ENCODE measurements at regions of chr17 and their contacts with region 1.

Region 1: GRCh38 chr17:60036796-60037612 is 41.7 kb downstream of the HEATR6 start:
- DNase-seq: peak; percentile 68 to 85 (median 72)
- ATAC-seq: peak; percentile 97
- H3K4me3 ChIP-seq: no peak overlapping the region
- H3K27ac ChIP-seq: no peak overlapping the region
- H3K4me1 ChIP-seq: peaks cover 6 to 16% of the 10 kb centered on the region in 2 experiments; a peak in 4 of 5 replicates
- H3K27me3 ChIP-seq: no peaks in the 10 kb centered on the region
- CTCF ChIP-seq: peak; percentile 88 to 98 (median 92)
- EP300 ChIP-seq: no peak
- POLR2A ChIP-seq: no peak
- RAD21 ChIP-seq: peak in 1 of 2 experiments; percentile 62; a peak in 2 of 4 replicates

Region 2: DNA sequence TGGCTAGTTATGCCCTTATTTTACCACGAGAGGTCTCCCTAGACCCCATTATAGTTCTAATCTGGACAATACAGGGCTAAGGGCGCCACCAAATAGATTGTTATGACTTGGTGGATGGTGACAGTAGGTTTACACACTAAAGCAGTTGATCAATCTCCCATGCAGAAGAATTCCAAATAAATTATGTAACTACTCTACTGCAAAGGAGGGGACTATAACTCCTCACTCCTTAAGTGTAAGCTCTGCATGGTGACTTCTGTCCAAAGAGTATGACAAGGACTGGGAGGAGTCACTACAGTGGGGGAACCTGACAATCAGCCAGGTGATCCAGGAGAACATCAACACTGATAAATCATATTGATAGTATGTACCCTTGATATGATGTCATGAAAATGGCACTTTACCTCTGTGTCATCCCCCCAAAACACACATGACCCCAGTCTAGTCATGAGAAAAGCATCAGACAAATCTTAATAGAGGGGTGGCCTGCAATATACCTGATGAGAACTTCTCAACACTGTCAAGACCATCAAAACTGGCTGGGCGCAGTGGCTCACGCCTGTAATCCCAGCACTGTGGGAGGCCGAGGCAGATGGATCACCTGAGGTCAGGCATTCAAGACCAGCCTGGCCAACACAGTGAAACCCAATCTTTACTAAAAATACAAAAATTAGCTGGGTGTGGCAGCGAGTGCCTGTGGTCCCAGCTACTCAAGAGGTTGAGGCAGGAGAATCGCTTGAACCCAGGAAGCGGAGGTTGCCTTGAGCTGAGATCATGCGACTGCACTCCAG is 725.7 kb before region 1 on chr17:
- CTCF ChIA-PET with region 1: no interaction called
- POLR2A ChIA-PET with region 1: no interaction called
- in situ Hi-C with region 1: loop called (anchors 10 kb)
- intact Hi-C with region 1: no loop called
- DNase-seq: peak; percentile 66 to 81 (median 71)
- ATAC-seq: peak; percentile 98
- H3K4me3 ChIP-seq: no peak overlapping the region
- H3K27ac ChIP-seq: no peak overlapping the region
- H3K4me1 ChIP-seq: 0 out of 5 replicates have a peak, but pooled peaks cover 0 to 4% of the 10 kb centered on the region in 2 experiments
- H3K27me3 ChIP-seq: no peaks in the 10 kb centered on the region
- CTCF ChIP-seq: peak; percentile 81 to 94 (median 88)
- EP300 ChIP-seq: no peak
- POLR2A ChIP-seq: no peak
- RAD21 ChIP-seq: peak; percentile 94 to 95

Region 3: DNA sequence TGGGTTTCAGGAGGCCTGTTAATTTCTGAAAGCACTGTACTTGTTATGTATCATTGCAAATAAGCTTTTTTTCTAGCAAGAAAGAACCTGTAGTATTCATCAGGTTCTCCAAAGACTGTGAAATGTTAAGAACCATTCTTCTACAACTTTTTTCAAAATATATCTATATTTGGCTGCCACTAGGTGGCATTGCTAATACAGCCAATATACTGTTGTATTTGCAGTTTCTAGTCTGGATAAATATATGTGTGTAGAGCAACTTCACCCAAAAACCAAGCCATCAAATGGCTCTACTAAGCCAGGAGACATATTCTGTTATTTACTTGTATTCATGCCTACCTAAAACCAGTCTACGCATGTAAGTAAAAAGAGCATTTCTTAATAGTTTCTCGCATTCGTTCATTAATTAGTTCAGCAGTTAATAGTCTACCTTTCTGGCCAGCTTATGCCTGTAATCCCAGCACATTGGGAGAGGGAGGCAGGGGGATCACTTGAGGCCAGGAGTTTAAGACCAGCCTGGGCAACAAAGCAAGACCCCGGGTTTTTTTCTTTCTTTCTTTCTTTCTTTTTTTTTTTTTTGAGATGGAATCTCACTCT is 290.1 kb before region 1 on chr17:
- CTCF ChIA-PET with region 1: no interaction called
- POLR2A ChIA-PET with region 1: no interaction called
- in situ Hi-C with region 1: loop called (anchors 5 kb)
- intact Hi-C with region 1: no loop called
- DNase-seq: peak in 3 of 4 experiments; percentile 14 to 56 (median 22)
- ATAC-seq: peak; percentile 78
- H3K4me3 ChIP-seq: no peak overlapping the region
- H3K27ac ChIP-seq: no peak overlapping the region
- H3K4me1 ChIP-seq: no peaks in the 10 kb centered on the region; a peak in 1 of 5 replicates
- H3K27me3 ChIP-seq: no peaks in the 10 kb centered on the region
- CTCF ChIP-seq: peak; percentile 46 to 74 (median 55); a peak in 4 of 6 replicates
- EP300 ChIP-seq: no peak
- POLR2A ChIP-seq: no peak
- RAD21 ChIP-seq: peak; percentile 58 to 83

Region 4: DNA sequence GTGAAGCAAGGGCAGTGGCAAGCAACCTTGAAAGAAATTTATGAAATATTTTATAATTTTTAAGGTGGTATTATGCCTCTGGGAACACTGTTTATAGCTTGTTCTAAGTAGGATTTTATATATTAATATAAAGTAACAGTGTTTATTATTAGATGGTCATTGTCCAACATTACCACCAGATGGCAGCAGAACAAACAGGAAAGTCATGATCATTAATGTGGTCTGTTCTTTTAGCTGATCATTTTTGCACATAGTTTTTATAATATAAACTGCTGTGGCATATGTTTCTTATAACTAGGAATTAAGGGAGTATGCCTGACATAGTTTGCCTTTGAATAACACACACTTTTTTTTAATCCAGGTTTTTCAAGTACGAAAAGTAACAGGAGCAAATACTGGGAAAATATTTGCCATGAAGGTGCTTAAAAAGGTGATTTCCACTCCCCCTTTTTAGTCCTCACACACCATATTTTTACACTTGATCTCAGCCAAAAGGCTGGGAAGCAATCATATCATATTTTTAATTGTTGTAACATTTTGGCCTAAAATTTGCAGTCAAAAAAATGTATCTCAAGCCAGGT is 122.6 kb before region 1 on chr17:
- CTCF ChIA-PET with region 1: interaction called, 3 read pairs
- POLR2A ChIA-PET with region 1: no interaction called
- in situ Hi-C with region 1: loop called (anchors 5 kb)
- intact Hi-C with region 1: no loop called
- DNase-seq: peak; percentile 47 to 55 (median 50)
- ATAC-seq: peak; percentile 70
- H3K4me3 ChIP-seq: no peak overlapping the region
- H3K27ac ChIP-seq: no peak overlapping the region
- H3K4me1 ChIP-seq: no peaks in the 10 kb centered on the region
- H3K27me3 ChIP-seq: no peaks in the 10 kb centered on the region
- CTCF ChIP-seq: peak in 2 of 3 experiments; percentile 43 to 73; a peak in 4 of 6 replicates
- EP300 ChIP-seq: no peak
- POLR2A ChIP-seq: no peak
- RAD21 ChIP-seq: peak; percentile 62 to 70

Region 5: DNA sequence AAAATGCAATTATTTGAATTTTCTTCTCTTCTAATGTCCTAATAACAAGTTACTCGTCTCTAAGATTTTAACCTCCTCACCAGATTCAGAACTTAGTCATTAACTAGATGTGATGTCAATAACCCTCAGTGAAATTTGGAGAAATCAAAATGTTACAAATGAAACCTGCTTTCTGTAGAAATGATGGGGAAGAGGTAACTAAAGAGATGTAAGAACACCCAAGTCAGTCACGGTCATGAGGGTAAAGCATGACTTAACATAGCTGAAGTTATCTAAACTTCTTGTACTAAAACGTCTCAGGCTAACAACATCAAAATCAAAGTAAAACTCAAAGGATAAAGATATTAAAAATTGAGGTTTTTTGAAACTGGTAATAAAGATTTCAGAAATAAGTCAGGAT is 82.1 kb before region 1 on chr17:
- CTCF ChIA-PET with region 1: no interaction called
- POLR2A ChIA-PET with region 1: no interaction called
- in situ Hi-C with region 1: loop called (anchors 5 kb)
- intact Hi-C with region 1: no loop called
- DNase-seq: no peak
- ATAC-seq: no peak
- H3K4me3 ChIP-seq: no peak overlapping the region
- H3K27ac ChIP-seq: no peak overlapping the region
- H3K4me1 ChIP-seq: no peaks in the 10 kb centered on the region; a peak in 1 of 5 replicates
- H3K27me3 ChIP-seq: no peaks in the 10 kb centered on the region
- CTCF ChIP-seq: no peak
- EP300 ChIP-seq: no peak
- POLR2A ChIP-seq: no peak
- RAD21 ChIP-seq: no peak

Region 6: GRCh38 chr17:60049936-60050335 is 12.9 kb after region 1 on chr17:
- CTCF ChIA-PET with region 1: no interaction called
- POLR2A ChIA-PET with region 1: interaction called, 10 read pairs
- in situ Hi-C with region 1: no loop called
- intact Hi-C with region 1: no loop called
- DNase-seq: no peak
- ATAC-seq: no peak
- H3K4me3 ChIP-seq: no peak overlapping the region
- H3K27ac ChIP-seq: no peak overlapping the region
- H3K4me1 ChIP-seq: no peaks in the 10 kb centered on the region
- H3K27me3 ChIP-seq: no peaks in the 10 kb centered on the region
- CTCF ChIP-seq: no peak
- EP300 ChIP-seq: no peak
- POLR2A ChIP-seq: no peak
- RAD21 ChIP-seq: no peak

Region 7: GRCh38 chr17:60087882-60088669 is 51.1 kb after region 1 on chr17:
- CTCF ChIA-PET with region 1: no interaction called
- POLR2A ChIA-PET with region 1: no interaction called
- in situ Hi-C with region 1: no loop called
- intact Hi-C with region 1: no loop called
- DNase-seq: peak in 2 of 4 experiments; percentile 36 to 41
- ATAC-seq: peak; percentile 84
- H3K4me3 ChIP-seq: no peak overlapping the region
- H3K27ac ChIP-seq: no peak overlapping the region
- H3K4me1 ChIP-seq: peaks cover 8 to 10% of the 10 kb centered on the region in 2 experiments; a peak in 4 of 5 replicates
- H3K27me3 ChIP-seq: no peaks in the 10 kb centered on the region
- CTCF ChIP-seq: no peak
- EP300 ChIP-seq: no peak
- POLR2A ChIP-seq: no peak
- RAD21 ChIP-seq: no peak

Region 8: DNA sequence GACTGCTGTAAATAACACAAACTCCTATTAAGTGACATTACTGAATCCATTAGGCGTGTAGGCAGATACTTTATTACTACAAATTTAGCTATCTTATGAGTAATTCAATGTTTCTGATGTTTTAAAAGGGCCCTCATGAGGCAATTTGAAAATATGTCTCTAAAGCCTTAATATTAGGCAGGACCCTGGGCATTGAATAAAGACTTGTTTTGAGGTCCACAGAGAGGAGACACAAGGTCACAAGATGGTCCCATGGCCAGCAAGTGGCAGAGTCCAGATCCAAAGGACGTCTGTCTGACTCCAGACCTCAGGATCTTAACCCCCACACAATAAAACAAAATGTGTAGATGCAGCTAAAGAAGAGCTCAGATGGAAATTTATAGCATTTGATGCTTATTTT is 73.6 kb after region 1 on chr17:
- CTCF ChIA-PET with region 1: no interaction called
- POLR2A ChIA-PET with region 1: no interaction called
- in situ Hi-C with region 1: loop called (anchors 10 kb)
- intact Hi-C with region 1: no loop called
- DNase-seq: no peak
- ATAC-seq: no peak
- H3K4me3 ChIP-seq: no peak overlapping the region
- H3K27ac ChIP-seq: no peak overlapping the region
- H3K4me1 ChIP-seq: no peaks in the 10 kb centered on the region; a peak in 1 of 5 replicates
- H3K27me3 ChIP-seq: peaks cover 8 to 9% of the 10 kb centered on the region in 2 experiments; a peak in 2 of 5 replicates
- CTCF ChIP-seq: no peak
- EP300 ChIP-seq: no peak
- POLR2A ChIP-seq: no peak
- RAD21 ChIP-seq: no peak